ENCODE measurements at regions of chr1 and their contacts with region 1.

Region 1: DNA sequence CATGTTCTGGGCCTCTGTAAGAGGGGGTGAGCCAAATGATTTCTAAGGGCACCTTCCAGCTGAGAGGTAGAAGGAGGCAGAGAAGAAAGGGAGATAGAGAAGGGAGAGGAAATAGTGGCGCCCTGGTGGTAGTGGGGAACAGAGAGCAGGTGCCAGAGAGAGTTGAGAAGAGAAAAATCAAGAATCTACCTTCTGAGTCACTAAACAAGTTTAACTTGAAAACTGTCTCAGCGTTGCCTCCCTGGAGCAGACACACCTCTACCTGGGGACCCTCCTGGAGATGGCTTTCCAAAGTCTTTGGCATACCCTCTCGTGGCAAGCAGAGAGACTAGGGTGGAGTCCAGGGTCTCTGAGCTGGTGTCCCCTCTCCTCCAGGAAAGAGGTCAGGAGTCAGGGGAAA is 1.1 kb upstream of the SLC45A3 start:
- DNase-seq: no peak
- H3K4me3 ChIP-seq: no peak overlapping the region
- H3K27ac ChIP-seq: no peak overlapping the region
- H3K4me1 ChIP-seq: peaks cover 15% of the 10 kb centered on the region
- H3K27me3 ChIP-seq: no peaks in the 10 kb centered on the region
- CTCF ChIP-seq: no peak

Region 2: DNA sequence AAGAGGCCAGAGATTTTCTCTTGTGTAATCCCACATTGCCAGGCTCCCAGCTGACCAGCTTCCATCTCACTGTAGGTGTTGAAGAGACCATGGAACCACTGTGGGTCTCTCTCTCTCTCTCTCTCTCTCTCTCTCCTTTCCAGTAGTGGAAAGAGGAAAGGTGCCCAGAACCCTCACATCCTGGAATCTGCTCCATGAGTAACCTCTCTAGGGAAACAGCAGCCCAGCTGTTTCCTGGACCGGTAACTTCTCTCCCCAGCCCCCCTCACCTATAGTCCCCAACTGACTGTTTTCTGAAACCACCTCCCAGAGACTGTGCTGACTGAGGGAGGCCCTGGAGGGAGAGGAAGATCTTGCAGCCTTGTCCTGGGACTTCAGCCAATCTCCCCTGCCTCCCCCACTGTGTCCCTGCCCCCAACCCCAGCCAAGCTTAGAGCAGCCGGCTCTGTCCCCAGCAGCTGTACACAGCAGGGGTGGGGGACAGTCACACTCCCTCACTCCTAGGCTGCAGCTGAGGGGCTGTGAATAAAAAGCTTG is 19.6 kb after region 1 on chr1:
- CTCF ChIA-PET with region 1: no interaction called
- POLR2A ChIA-PET with region 1: interaction called, 12 read pairs
- intact Hi-C with region 1: no loop called
- DNase-seq: peak; percentile 92
- H3K4me3 ChIP-seq: peak overlapping the region; percentile 6
- H3K27ac ChIP-seq: peak overlapping the region; percentile 64
- H3K4me1 ChIP-seq: peaks cover 22% of the 10 kb centered on the region
- H3K27me3 ChIP-seq: no peaks in the 10 kb centered on the region
- CTCF ChIP-seq: no peak

Region 3: DNA sequence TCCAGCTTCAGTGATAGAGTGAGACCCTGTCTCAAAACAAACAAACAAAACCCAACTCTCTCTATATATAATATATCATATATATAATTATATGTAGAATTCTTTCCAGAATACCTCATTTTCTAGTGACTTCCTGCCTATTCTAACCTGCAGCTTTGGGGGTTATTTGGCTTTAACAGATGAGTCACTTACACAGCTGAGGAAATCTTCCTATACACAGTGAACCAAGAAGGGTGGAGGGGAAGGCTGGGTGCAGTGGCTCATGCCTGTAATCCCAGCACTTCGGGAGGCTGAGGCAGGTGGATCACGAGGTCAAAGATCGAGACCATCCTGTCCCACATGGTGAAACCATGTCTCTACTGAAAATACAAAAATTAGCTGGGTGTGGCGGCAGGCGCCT is 84.7 kb after region 1 on chr1:
- CTCF ChIA-PET with region 1: no interaction called
- POLR2A ChIA-PET with region 1: no interaction called
- intact Hi-C with region 1: no loop called
- DNase-seq: no peak
- H3K4me3 ChIP-seq: no peak overlapping the region
- H3K27ac ChIP-seq: no peak overlapping the region
- H3K4me1 ChIP-seq: no peaks in the 10 kb centered on the region
- H3K27me3 ChIP-seq: no peaks in the 10 kb centered on the region
- CTCF ChIP-seq: no peak

Region 4: GRCh38 chr1:205998457-205999241 is 317.3 kb after region 1 on chr1:
- CTCF ChIA-PET with region 1: no interaction called
- POLR2A ChIA-PET with region 1: no interaction called
- intact Hi-C with region 1: no loop called
- DNase-seq: no peak
- H3K4me3 ChIP-seq: no peak overlapping the region
- H3K27ac ChIP-seq: no peak overlapping the region
- H3K4me1 ChIP-seq: peaks cover 4% of the 10 kb centered on the region
- H3K27me3 ChIP-seq: no peaks in the 10 kb centered on the region
- CTCF ChIP-seq: no peak

Measured in A673 (cell line).